IMR-90 (cell line): ENCODE measurements at regions of chr13 and their contacts with region 1.

Region 1: GRCh38 chr13:80214521-80214991 is 126.4 kb downstream of the SPRY2 start:
- DNase-seq: peak; percentile 59
- ATAC-seq: no peak
- H3K4me3 ChIP-seq: no peak overlapping the region
- H3K27ac ChIP-seq: no peak overlapping the region
- H3K4me1 ChIP-seq: peaks cover 9% of the 10 kb centered on the region
- H3K27me3 ChIP-seq: no peaks in the 10 kb centered on the region
- CTCF ChIP-seq: no peak
- POLR2A ChIP-seq: no peak
- RAD21 ChIP-seq: no peak

Region 2: GRCh38 chr13:80048802-80049201 is 165.8 kb before region 1 on chr13:
- CTCF ChIA-PET with region 1: no interaction called
- POLR2A ChIA-PET with region 1: no interaction called
- dilution Hi-C with region 1: no loop called
- in situ Hi-C with region 1: no loop called
- intact Hi-C with region 1: loop called (anchors 10 kb)
- DNase-seq: peak; percentile 98
- ATAC-seq: peak; percentile 99
- H3K4me3 ChIP-seq: no peak overlapping the region
- H3K27ac ChIP-seq: no peak overlapping the region
- H3K4me1 ChIP-seq: peaks cover 7% of the 10 kb centered on the region
- H3K27me3 ChIP-seq: no peaks in the 10 kb centered on the region
- CTCF ChIP-seq: no peak
- POLR2A ChIP-seq: no peak
- RAD21 ChIP-seq: peak; percentile 39